Activated naive CD8-positive, alpha-beta T cell treated with anti-CD3 and anti-CD28 coated beads, Interleukin-2, amount 10 ng/mL, durations not matched to agents 7 days and 5 days (primary cell): ENCODE measurements at regions of chr7 and their contacts with region 1.

Region 1: DNA sequence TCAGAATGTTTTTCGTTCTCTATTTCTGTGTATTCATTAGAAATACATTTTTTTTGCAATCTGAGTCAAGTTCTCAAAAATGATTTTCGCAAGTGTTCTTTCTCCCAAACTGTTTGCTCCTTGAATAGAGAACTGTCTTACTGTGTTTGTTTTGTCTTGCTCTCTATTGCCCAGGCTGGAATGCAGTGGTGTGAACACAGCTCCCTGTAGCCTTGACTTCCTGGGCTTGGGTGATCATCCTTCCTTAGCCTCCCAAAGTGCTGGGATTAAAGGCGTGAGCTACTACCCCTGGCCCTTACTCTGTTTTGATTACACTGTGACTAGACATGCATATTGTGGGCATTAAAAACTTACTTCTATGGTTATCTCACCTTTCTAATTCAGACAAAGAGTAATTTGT is 56.7 kb downstream of the LUC7L2 start:
- DNase-seq: no peak
- ATAC-seq: no peak
- H3K4me3 Mint-ChIP-seq: no peak overlapping the region
- H3K27ac Mint-ChIP-seq: no peak overlapping the region
- H3K4me1 Mint-ChIP-seq: peaks cover 1% of the 10 kb centered on the region
- H3K27me3 Mint-ChIP-seq: no peaks in the 10 kb centered on the region

Region 2: GRCh38 chr7:140463111-140463510 is 1046.7 kb after region 1 on chr7:
- POLR2A ChIA-PET with region 1: interaction called, 10 read pairs
- DNase-seq: no peak
- ATAC-seq: no peak
- H3K4me3 Mint-ChIP-seq: no peak overlapping the region
- H3K27ac Mint-ChIP-seq: no peak overlapping the region
- H3K4me1 Mint-ChIP-seq: peaks cover 7% of the 10 kb centered on the region
- H3K27me3 Mint-ChIP-seq: no peaks in the 10 kb centered on the region